PC-3 (cell line): ENCODE measurements at regions of chr1 and their contacts with region 1.

Region 1: DNA sequence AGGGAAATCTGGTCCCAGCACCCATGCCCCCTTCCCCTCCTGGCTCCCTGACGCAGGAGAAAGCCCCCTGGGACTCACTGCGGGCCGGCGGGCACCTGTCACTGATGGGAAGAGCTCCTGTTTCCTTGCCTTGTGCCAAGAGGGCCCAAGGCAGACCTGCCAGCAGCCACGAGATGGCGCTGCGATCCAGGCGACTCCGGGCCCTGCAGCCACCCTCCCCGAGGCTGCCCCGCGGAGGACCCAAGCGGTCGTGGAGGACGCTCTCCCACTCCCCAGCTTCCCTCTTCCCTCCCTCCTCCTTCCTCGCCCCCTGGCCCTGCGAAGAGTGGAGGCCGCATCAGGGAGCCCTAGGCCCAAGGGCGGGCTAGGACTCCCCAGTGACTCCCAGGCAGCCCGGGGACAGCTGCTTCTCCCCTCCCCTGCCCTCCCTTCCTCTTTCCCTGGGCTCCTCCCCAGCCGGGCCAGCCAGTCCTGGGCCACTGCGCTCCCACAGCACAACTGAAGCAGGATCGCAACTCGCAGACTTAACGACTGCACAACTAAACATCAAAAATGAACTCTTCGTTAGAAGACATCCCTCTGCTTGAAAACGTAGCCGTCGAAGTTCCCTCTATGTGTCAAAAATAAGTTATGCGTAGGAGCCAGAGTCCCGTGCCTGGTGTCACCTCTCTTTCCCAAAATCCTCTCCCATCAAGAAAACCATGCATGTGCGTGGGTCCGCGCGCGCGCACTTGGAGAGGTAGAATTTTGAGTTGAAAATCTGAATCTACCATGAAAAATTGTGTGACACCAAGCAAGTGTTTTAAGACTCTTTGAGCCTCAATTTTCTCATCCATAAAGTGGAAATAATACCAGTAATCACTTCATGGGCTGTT is 34.2 kb downstream of the BATF3 start:
- DNase-seq: peak; percentile 95
- ATAC-seq: peak; percentile 88
- H3K4me3 ChIP-seq: peak overlapping the region; percentile 72
- H3K27ac ChIP-seq: no peak overlapping the region; the same call in 1 of the 2 replicates
- H3K4me1 ChIP-seq: peaks cover 35% of the 10 kb centered on the region
- H3K27me3 ChIP-seq: no peaks in the 10 kb centered on the region
- CTCF ChIP-seq: peak; percentile 99

Region 2: GRCh38 chr1:212586206-212587015 is 79.1 kb before region 1 on chr1:
- CTCF ChIA-PET with region 1: no interaction called
- POLR2A ChIA-PET with region 1: no interaction called
- intact Hi-C with region 1: no loop called
- DNase-seq: no peak
- ATAC-seq: no peak
- H3K4me3 ChIP-seq: no peak overlapping the region
- H3K27ac ChIP-seq: no peak overlapping the region
- H3K4me1 ChIP-seq: no peaks in the 10 kb centered on the region
- H3K27me3 ChIP-seq: no peaks in the 10 kb centered on the region
- CTCF ChIP-seq: no peak

Region 3: GRCh38 chr1:212749821-212750535 is 84.5 kb after region 1 on chr1:
- CTCF ChIA-PET with region 1: interaction called, 10 read pairs
- POLR2A ChIA-PET with region 1: no interaction called
- intact Hi-C with region 1: loop called (anchors 1 kb)
- DNase-seq: peak; percentile 80
- ATAC-seq: peak; percentile 76
- H3K4me3 ChIP-seq: no peak overlapping the region
- H3K27ac ChIP-seq: no peak overlapping the region
- H3K4me1 ChIP-seq: no peaks in the 10 kb centered on the region
- H3K27me3 ChIP-seq: no peaks in the 10 kb centered on the region
- CTCF ChIP-seq: peak; percentile 93

Region 4: GRCh38 chr1:213858581-213858980 is 1193.1 kb after region 1 on chr1:
- CTCF ChIA-PET with region 1: no interaction called
- POLR2A ChIA-PET with region 1: no interaction called
- intact Hi-C with region 1: no loop called
- DNase-seq: no peak
- ATAC-seq: no peak
- H3K4me3 ChIP-seq: no peak overlapping the region
- H3K27ac ChIP-seq: no peak overlapping the region
- H3K4me1 ChIP-seq: no peaks in the 10 kb centered on the region
- H3K27me3 ChIP-seq: peaks cover 83% of the 10 kb centered on the region
- CTCF ChIP-seq: no peak